ENCODE measurements at regions of chr1 and their contacts with region 1.

Region 1: DNA sequence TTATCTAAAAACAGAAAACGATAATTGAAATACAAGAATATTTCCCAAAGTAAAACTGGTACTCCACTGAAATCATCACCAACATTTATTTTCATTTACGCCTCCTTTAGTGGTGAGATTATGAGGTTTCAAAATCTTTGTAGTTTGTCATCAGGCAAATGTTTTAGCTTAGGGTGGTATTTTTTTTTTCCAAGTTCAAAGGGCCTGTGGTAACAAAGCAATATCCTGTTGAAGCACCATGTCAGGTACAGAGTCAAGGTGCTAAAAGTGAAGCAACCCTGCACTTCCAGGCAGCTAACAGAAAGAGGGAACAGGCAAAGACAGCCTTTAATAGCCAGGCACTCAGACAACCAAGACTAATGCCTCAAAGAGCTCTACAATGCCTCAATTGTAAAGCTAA is 89.2 kb downstream of the JAK1 start:
- DNase-seq: no peak
- ATAC-seq: no peak

Region 2: GRCh38 chr1:64515427-64515826 is 361.7 kb before region 1 on chr1:
- intact Hi-C with region 1: no loop called
- DNase-seq: peak; percentile 38
- ATAC-seq: peak; percentile 84

Region 3: GRCh38 chr1:64956733-64957441 is 79.7 kb after region 1 on chr1:
- intact Hi-C with region 1: loop called (anchors 10 kb)
- DNase-seq: no peak
- ATAC-seq: peak; percentile 26

Measured in left ventricle myocardium superior (tissue), 1 donor.